ENCODE measurements at regions of chr2 and their contacts with region 1.

Region 1: DNA sequence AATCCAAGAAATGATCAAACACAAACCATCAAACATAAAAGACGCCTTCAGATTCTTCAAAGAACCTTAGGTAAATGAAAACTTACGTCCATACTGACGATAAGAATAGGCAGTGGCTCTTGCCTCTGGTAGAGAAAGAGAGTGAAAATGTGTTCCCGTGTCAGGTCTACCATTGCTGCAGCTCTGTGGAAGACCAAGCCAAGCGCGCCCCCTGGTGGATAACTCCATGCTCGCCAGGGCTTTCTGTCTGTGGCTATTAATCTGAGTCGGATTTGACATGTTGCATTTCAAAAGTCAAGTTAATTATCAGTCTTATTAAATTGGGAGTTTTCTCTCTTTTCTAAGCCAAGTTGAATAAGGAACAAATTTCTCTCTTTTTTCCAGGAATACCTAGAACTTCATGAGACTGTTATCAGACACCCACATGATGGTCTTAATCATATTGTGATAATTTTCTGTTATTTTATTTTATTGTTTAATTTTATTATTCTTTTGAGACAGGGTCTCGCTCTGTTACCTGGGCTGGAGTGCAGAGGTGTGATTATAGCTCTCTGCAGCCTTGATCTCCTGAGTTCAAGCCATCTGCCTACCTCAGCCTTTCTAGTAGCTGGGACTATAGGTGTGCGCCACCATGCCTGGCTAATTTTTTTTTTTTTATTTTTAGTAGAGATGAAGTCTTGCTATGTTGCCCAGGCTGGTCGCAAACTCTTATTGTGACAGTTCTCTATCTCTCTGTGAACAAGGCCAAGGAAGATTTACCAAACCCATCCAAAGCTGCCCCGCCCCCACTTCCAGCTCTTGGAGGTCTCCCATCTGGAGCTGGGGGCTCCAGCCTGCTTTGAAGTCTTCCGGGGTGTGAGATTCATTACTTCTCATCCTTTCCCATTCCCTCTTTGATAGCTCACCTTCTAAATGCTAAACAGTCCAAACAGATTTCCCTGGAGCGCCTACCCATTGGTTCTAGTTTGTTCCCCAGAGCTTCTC is 15.8 kb upstream of the ZAP70 start:
- DNase-seq: peak; percentile 82
- CTCF ChIP-seq: peak; percentile 79

Region 2: DNA sequence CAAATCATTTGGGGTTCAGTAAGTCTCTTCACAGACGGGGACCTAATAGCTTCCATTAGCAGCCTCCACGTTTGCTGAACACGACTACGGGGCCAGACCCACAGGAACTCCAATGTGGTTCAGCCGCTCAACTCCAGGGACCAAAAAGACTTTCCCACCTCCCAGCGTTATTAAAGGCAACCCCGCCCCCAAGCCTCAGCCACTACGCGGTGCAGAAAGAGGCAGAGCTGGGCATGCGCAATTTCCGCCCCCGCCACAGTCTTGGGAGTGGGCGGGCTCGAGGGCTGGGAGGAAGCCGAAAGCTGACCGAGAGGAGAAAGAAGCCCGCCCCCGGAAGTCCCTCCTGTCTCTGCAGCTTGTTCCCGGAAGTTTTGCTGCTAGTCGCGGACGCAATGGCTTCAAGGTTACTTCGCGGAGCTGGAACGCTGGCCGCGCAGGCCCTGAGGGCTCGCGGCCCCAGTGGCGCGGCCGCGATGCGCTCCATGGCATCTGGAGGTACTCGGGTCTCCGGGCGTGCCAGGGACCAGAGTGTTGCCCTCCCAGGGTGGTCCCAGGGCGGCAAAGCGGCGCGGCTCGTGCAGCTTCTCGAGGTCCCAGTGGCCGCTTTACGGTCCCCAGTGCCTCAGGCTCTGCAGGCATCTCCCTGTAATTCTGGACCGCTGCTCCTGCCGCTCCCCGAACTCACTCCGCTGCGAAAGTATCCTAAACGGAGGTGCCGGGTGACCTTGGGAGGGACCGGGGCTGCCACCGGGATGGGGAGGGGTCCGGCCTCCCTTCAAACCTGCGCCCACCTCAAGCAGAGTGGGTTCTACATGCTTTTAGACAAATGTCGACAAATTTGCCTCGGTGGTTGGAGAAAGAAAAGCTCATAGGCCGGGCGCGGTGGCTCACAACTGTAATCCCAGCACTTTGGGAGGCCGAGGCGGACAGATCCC is 51.6 kb before region 1 on chr2 and contains the start of gene COX5B:
- CTCF ChIA-PET with region 1: interaction called, 60 read pairs
- POLR2A ChIA-PET with region 1: no interaction called
- DNase-seq: peak; percentile 99
- CTCF ChIP-seq: no peak

Region 3: DNA sequence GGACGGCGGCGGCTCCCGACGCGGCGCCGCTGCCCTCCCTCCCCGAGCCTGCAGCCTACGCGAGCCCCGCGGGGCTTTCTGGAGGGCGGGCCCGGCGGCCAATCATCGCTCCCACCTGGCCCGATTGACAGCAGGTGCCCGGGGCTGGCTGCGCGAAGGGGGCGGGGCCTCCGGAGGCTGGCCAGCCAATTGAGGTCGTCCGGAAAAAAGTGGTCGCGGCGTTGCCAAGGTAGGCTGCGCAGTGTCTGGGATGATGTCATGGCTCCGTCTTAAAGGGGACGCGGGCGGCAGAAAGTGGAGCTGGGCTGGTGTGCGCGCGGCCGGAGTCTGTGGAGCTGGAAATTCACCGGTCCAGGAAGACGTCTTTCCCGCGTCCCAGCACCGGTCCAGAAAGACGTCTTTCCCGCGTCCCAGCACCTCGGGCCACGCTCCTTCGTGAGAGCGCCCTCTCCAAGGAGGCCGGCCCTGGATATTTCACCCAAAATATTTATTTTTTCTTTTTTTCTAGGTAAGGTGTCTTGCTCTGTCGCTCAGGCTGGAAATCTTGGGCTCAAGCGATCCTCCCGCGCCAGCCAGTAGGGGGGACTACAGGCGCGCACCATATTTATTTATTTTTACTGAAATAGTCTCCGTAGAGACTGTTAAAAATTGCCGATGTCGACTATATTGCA is 33.4 kb before region 1 on chr2 and contains the start of gene ACTR1B:
- CTCF ChIA-PET with region 1: interaction called, 71 read pairs
- POLR2A ChIA-PET with region 1: no interaction called
- DNase-seq: peak; percentile 98
- CTCF ChIP-seq: peak; percentile 63

Region 4: DNA sequence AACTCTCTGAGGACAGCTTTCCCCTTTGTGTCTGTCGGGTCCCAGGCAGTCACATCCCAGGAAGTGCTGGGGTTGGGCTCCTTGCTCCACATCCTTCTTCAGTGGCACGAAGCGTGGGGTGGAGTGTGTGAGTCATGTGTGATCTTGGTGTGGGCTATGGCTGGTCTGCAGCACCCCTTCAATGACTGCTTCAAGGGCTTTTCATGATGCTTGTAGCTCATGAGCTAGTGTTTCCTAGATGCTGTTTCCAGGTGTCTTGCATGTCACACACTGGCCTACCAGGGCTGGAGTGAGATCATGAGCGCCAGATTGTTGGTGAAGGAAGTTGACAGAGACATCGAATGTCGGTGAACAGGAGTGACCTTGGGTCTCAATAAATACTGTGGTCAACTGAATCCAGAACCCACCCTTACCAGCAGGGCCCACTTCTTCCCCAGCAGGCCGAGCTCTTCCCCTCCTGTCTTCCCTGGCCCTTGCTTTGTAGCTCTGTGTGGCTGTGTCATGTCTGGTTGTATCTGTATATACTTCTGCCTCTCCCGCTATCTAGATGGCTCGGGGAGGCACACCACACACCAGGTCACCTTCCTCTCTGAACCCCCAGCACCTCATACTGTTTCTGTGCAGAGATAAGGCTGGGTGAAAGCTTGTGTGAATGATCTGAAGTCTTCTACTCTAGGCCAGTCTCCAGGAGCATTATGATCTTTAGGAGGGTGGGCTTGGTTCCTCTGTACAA is 24.2 kb before region 1 on chr2:
- CTCF ChIA-PET with region 1: interaction called, 40 read pairs
- POLR2A ChIA-PET with region 1: no interaction called
- DNase-seq: no peak
- CTCF ChIP-seq: no peak

Region 5: GRCh38 chr2:97718051-97718882 is 20.7 kb after region 1 on chr2:
- CTCF ChIA-PET with region 1: interaction called, 122 read pairs
- POLR2A ChIA-PET with region 1: no interaction called
- DNase-seq: peak; percentile 72
- CTCF ChIP-seq: no peak

Region 6: GRCh38 chr2:97931118-97931857 is 233.7 kb after region 1 on chr2:
- CTCF ChIA-PET with region 1: no interaction called
- POLR2A ChIA-PET with region 1: no interaction called
- DNase-seq: peak; percentile 22
- CTCF ChIP-seq: no peak

Region 7: DNA sequence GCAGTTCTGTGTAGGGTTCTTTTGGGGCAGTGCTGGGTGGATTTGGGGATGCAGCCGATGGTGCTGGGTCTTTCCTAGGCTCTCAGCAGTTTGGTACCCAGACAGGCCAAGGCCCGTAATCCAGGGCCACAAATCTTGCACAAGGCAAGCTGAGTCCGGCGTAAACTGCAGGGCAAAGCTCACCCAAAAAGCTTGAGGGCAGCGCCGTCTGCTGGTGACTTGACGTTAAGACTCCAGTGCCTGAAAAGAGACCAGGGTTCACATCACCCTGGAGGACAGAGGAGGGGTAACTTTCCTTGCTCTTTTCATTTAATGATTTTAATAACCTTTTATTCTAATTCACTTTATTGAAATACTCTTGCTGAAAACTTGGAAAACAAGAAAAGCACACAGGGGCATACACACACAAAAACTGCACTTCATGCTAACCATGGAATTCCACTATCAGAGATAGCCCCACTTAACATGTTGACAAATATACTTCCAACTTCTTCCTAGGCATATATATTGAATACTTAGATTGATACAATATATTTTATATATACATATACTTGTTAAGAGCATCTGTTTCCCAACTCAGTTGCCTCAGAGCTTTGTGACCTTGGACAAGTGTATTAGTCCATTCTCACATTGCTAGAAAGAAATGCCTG is 687.6 kb after region 1 on chr2:
- CTCF ChIA-PET with region 1: interaction called, 44 read pairs
- POLR2A ChIA-PET with region 1: no interaction called
- DNase-seq: peak; percentile 84
- CTCF ChIP-seq: peak; percentile 97

Region 8: DNA sequence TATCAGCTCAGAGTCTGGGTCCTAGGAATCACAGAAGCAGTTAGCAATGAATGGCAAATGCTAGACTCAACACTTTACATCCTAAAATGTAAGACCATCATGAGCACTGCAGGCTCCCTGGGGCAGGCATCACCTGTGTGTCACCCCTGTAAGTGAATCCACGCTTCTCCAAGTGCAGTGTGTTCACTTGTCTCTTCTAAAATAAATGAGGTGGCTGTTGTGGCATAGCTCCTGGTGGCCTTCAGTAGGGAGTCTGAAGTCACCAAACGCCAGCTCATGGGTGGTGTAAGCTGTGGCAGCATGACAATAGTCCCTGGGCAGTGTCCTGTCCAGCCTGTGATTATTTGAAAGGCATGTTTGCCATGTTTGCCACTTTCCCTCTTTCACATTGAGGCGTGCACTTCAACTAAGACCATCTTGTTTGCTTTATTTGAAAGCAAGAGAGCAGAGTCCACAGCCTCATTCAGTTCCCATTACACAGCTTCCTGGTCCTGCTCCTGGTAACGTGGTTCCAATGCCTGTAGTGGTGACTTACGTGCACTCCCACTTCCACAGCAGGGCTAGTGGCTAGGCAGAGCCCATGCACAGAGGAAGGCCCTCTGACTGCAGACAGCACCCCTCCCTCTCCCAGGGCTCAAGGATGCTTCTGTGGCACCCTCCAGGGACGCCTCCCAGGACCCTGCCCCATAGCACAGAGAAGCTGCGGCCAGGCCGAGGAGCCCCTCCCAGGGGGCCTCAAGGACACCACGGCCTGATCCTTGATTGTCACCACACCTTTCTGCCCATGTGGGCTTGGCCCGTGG is 886.5 kb after region 1 on chr2:
- CTCF ChIA-PET with region 1: no interaction called
- POLR2A ChIA-PET with region 1: no interaction called
- DNase-seq: no peak
- CTCF ChIP-seq: no peak